Activated naive CD4-positive, alpha-beta T cell treated with anti-CD3 and anti-CD28 coated beads for 36 hours (primary cell): ENCODE measurements at regions of chr17 and their contacts with region 1.

Region 1: DNA sequence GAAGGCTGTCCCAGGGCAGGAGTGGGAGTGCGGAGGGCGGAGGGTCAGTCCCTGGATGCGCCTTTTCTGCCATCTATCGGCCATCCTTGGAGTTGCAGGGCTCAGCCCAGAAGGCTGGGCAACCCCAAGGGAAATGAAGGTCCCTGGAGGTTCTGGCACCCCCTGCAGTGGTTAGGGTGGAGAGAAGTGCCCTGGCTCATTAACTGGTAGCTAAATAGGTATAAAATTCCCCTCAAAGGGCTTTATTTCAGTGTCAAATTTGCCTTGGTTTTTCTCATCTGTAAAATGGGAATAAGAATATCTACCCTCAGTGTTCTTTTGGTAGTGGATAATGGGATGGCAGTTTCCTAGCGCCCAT is 22.4 kb downstream of the C17orf75 start:
- DNase-seq: peak; percentile 87
- H3K4me3 Mint-ChIP-seq: peak overlapping the region; percentile 61
- H3K27ac Mint-ChIP-seq: no peak overlapping the region
- H3K4me1 Mint-ChIP-seq: peaks cover 17% of the 10 kb centered on the region
- H3K27me3 Mint-ChIP-seq: peaks cover 6% of the 10 kb centered on the region

Region 2: GRCh38 chr17:32206861-32207260 is 112.7 kb before region 1 on chr17:
- CTCF ChIA-PET with region 1: interaction called, 5 read pairs
- intact Hi-C with region 1: loop called (anchors 1 kb)
- DNase-seq: no peak
- H3K4me3 Mint-ChIP-seq: no peak overlapping the region
- H3K27ac Mint-ChIP-seq: no peak overlapping the region
- H3K4me1 Mint-ChIP-seq: no peaks in the 10 kb centered on the region
- H3K27me3 Mint-ChIP-seq: no peaks in the 10 kb centered on the region

Region 3: DNA sequence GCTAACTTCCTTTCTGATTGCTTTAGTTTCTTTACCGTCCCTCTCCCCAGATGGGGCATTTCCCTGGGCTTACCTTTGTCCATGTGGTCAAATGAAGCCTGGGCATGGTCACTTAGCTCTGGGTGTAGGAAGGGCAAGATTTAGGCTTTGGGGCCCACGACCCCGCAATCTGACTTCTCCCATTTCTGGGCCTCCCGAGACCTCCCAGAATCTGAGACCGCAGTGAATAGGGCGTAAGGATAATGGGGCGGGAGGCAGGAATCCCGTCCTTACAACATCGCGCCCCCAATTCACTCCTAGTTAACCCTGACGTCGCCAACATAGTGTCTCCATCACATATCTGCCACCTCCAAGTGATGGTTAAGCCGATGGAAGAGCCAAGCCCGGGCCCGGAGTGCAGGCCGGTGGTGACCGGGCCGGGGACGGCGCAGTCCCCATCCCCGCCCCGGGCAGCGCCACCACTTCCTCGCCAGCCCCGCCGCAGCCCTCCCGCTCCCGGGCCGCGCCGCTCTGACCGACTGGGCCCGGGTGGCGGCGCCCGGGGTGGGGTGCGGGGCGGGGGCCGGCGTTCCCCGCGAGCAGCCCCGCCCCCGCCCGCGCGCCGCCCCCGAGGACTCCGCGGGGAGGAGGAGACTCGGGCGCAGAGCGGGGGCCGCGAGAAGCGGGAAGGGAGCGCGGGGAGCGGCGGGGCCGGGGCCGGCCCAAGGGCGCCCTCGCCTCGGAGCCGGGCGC is 54.2 kb before region 1 on chr17 and contains the start of gene RHBDL3:
- CTCF ChIA-PET with region 1: no interaction called
- intact Hi-C with region 1: no loop called
- DNase-seq: no peak
- H3K4me3 Mint-ChIP-seq: peak within 1 kb of the TSS; percentile 68
- H3K27ac Mint-ChIP-seq: no peak within 1 kb of the TSS
- H3K4me1 Mint-ChIP-seq: peaks cover 13% of the 10 kb centered on the region
- H3K27me3 Mint-ChIP-seq: peaks cover 54% of the 10 kb centered on the region
- total RNA-seq, gene RHBDL3: not detected